ENCODE measurements at regions of chr21 and their contacts with region 1.

Region 1: DNA sequence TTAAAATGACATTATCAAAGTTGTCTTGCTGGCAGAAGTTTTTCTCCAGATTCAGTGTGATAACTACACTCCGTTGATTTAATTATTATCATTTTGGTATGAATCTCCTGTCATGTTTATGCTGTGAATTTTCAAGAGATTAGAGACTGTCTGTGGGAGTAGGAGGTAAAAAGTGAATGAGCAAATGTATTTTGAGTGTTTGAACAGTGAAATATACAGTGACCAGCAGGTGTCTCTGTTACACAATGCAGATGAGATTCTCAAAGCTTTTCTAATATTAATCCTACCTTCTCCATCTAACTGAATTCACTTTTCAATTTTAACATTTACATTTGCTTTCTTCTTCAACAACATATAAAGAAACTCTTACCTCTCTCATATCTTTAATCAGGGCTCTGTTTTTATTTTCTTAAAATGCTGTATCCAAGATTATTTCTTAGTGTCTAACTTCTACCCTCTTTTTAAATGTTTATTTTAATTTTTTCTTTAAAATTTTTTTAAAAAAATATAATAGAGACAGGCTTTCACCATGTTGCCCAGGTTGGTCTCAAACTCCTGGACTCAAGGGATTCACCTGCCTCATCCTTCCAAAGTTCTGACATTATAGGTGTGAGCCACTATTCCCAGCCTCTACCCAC is 20.9 kb upstream of the HSPA13 start:
- DNase-seq: peak in 1 of 2 donors; percentile 72
- ATAC-seq: peak; percentile 54 to 66 (median 60)
- H3K4me3 ChIP-seq: no peak overlapping the region
- H3K4me3 Mint-ChIP-seq: no peak overlapping the region
- H3K27ac ChIP-seq: no peak overlapping the region
- H3K27ac Mint-ChIP-seq: no peak overlapping the region
- H3K4me1 ChIP-seq: no peaks in the 10 kb centered on the region
- H3K4me1 Mint-ChIP-seq: no peaks in the 10 kb centered on the region
- H3K27me3 ChIP-seq: no peaks in the 10 kb centered on the region
- H3K27me3 Mint-ChIP-seq: peaks cover 4 to 10% of the 10 kb centered on the region in 2 donors
- CTCF ChIP-seq: peak; percentile 70

Region 2: DNA sequence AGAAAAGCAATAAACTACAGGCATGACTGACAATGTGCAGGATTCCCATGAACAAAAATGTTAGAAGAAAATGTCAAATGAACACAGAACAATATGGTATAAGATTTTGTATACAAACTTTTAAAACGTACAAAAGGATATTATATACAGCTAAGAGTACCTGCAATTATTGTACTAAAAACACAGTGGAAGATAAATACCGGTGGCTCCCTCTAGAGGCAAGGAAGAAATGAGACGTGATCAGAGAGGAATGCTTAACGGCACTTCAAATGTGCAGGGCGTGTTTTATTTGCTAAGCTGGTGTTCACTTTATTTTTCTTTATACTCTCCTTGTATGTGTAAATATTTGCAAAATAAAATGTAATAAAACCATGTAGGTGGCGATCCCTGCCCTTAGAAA is 334.1 kb after region 1 on chr21:
- intact Hi-C with region 1: loop called (anchors 1 kb)
- DNase-seq: peak in 1 of 2 donors; percentile 87
- ATAC-seq: peak; percentile 83 to 86 (median 83)
- H3K4me3 ChIP-seq: no peak overlapping the region
- H3K4me3 Mint-ChIP-seq: no peak overlapping the region
- H3K27ac ChIP-seq: no peak overlapping the region
- H3K27ac Mint-ChIP-seq: no peak overlapping the region
- H3K4me1 ChIP-seq: no peaks in the 10 kb centered on the region
- H3K4me1 Mint-ChIP-seq: peaks cover 0 to 4% of the 10 kb centered on the region in 2 donors
- H3K27me3 ChIP-seq: no peaks in the 10 kb centered on the region
- H3K27me3 Mint-ChIP-seq: no peaks in the 10 kb centered on the region
- CTCF ChIP-seq: peak; percentile 87

Region 3: GRCh38 chr21:14773777-14774345 is 370.1 kb after region 1 on chr21:
- intact Hi-C with region 1: loop called (anchors 10 kb)
- DNase-seq: peak in 1 of 2 donors; percentile 69
- ATAC-seq: peak; percentile 40 to 61 (median 55)
- H3K4me3 ChIP-seq: no peak overlapping the region
- H3K4me3 Mint-ChIP-seq: no peak overlapping the region
- H3K27ac ChIP-seq: no peak overlapping the region
- H3K27ac Mint-ChIP-seq: no peak overlapping the region
- H3K4me1 ChIP-seq: no peaks in the 10 kb centered on the region
- H3K4me1 Mint-ChIP-seq: no peaks in the 10 kb centered on the region
- H3K27me3 ChIP-seq: no peaks in the 10 kb centered on the region
- H3K27me3 Mint-ChIP-seq: peaks cover 0 to 2% of the 10 kb centered on the region in 2 donors
- CTCF ChIP-seq: peak; percentile 56

Region 4: DNA sequence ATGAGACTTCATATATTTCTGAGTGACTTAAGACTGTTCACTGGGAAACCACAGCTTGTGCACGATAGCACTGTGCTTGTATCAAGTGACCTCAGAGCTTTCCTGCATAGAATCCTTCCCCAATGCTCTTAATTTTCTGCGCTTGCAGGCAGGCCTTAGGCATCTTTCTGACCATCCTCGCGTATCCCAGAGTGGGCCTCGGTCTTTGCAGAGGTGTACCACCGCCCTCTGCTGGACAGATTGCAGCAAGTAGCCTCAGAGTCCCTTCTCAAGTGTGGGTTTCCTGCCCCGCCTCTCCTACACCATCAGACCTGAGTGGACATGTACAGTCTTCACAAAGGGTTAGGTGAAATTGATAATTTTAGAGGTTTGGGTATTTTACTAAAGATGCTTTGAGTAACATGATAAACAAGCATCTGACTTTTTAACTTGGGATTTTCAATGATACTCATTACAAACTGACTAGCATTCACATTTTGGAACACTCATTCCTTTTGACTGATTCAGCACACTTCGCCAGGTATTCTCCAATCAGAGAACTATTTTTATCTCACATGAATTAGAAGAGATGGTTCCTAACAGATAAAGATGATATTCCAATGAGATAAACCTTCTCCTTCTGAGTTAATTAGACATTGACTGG is 1079.5 kb after region 1 on chr21:
- intact Hi-C with region 1: loop called (anchors 2 kb)
- DNase-seq: peak; percentile 68 to 87
- ATAC-seq: peak; percentile 95 to 100 (median 100)
- H3K4me3 ChIP-seq: no peak overlapping the region
- H3K4me3 Mint-ChIP-seq: no peak overlapping the region
- H3K27ac ChIP-seq: no peak overlapping the region
- H3K27ac Mint-ChIP-seq: no peak overlapping the region
- H3K4me1 ChIP-seq: no peaks in the 10 kb centered on the region
- H3K4me1 Mint-ChIP-seq: peaks cover 5 to 6% of the 10 kb centered on the region in 2 donors
- H3K27me3 ChIP-seq: no peaks in the 10 kb centered on the region
- H3K27me3 Mint-ChIP-seq: no peaks in the 10 kb centered on the region
- CTCF ChIP-seq: peak; percentile 84

Region 5: DNA sequence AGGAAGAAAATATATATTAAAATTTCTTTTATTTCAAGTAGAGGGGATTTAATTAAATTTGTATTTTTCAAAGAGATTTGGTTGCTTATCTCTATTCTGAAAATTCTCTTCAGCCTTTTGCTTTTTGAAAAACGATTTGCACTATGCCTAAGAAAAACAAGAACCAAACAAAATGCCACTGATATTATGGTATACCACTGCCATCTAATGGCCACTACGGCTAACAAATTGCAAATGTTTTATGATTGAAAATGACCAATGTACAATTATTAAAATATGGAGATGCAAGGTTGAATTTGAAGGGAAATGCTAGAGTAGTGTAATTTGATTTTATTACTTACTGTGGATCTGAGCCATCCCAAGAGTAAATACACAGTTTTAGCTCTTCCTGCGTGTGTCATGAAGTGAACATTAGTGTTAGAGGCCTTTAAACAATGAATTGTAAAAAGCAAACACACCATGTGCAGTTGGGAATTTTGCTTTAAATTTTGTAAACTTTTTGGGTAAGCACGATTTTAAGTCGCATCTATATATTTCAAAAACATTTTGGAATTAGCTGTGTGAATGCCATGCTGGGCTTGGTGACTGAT is 1188.6 kb after region 1 on chr21:
- intact Hi-C with region 1: loop called (anchors 2 kb)
- DNase-seq: peak in 1 of 2 donors; percentile 68
- ATAC-seq: peak in 1 of 3 donors; percentile 57
- H3K4me3 ChIP-seq: no peak overlapping the region
- H3K4me3 Mint-ChIP-seq: no peak overlapping the region
- H3K27ac ChIP-seq: no peak overlapping the region
- H3K27ac Mint-ChIP-seq: no peak overlapping the region
- H3K4me1 ChIP-seq: no peaks in the 10 kb centered on the region
- H3K4me1 Mint-ChIP-seq: no peaks in the 10 kb centered on the region
- H3K27me3 ChIP-seq: no peaks in the 10 kb centered on the region
- H3K27me3 Mint-ChIP-seq: peaks cover 0 to 27% of the 10 kb centered on the region in 2 donors
- CTCF ChIP-seq: peak; percentile 78